Activated CD4-positive, alpha-beta T cell treated with anti-CD3 and anti-CD28 coated beads for 36 hours (primary cell): ENCODE measurements at regions of chr3 and their contacts with region 1.

Region 1: DNA sequence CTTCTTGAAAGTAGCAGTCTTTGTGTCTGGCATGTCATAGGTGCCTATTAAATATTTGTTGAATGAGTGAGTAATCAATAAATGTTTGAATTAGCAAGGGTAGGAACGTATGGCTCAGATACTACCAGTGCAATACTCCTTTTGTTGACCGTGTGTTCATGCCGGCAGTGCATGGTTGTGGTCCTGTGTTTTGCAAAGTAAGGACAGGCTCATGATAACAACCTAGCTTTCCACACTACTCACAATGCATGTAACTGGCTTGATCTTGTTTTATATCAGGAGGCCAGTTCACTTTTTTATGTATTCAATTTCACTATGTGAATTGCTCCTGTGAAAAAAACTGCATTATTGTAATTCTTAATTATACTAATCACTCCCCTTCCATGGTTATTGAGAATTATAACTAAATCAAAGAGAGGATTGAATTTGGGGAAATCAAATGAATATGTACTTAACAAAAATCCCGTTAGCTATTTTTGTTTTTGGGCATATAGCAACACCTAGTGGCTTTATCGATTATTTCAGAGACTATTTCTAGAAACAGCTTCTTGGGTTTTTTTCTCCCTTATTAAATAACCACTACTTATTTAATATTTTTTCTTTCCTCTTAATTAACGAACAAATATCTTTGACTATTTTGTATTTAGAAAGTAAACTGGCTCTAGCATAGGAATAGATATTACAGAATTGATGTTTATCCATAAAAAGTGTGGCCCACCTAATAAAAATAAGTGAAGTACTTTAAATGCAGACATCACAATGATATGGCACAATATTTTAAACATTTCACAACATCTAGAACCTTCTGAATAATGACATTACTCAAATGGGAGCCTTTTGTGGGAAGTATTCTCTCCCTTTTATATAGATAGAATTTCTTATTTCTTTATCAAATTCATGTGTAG is 218.5 kb downstream of the BBX start:
- DNase-seq: no peak
- ATAC-seq: no peak
- H3K4me3 Mint-ChIP-seq: no peak overlapping the region
- H3K27ac Mint-ChIP-seq: no peak overlapping the region
- H3K4me1 Mint-ChIP-seq: no peaks in the 10 kb centered on the region
- H3K27me3 Mint-ChIP-seq: no peaks in the 10 kb centered on the region

Region 2: DNA sequence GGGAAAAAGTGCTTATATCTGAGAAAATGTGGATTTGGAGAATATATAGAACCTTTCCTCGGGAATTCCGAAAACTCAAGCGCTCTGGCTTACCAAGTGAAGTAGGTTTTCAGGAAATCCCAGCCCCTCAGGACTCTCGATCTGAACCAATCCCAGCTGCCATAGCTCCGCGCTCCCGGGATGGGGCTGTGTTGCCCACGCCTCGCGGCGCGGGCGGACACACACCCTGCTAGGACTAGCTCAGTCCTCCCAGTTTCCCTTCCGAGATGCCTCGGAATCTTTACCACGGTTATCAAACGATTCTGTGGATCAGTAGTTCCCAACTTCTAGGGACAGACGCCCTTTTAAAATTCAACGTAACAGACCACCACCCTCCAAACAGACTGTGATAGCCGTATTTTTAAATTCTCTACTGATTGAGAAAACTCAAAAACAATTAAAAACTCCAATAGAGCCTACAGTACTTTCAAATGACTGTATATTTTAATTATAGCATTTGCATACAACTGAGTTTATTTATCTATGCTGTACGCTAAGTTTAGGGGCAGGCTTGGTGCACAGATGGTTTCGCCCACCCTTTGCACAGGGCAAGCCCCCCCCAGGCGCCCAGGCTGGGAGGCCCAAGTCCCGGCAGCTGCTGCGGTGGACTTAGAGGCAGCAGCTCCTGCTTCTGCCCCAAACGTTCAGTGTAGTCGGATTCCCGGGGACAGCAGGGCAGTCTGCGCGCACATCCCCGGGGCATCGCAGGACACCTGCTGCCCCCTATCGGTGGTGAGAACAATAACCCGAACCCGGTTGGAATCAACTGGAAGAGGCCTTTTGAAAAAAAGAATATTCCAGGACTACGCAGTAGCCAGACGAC is 311.7 kb before region 1 on chr3:
- CTCF ChIA-PET with region 1: no interaction called
- POLR2A ChIA-PET with region 1: no interaction called
- intact Hi-C with region 1: loop called in 1 of 2 experiments (anchors 5 kb)
- DNase-seq: peak; percentile 77
- ATAC-seq: peak; percentile 74
- H3K4me3 Mint-ChIP-seq: peak overlapping the region; percentile 68
- H3K27ac Mint-ChIP-seq: no peak overlapping the region
- H3K4me1 Mint-ChIP-seq: peaks cover 20% of the 10 kb centered on the region
- H3K27me3 Mint-ChIP-seq: peaks cover 3% of the 10 kb centered on the region

Region 3: DNA sequence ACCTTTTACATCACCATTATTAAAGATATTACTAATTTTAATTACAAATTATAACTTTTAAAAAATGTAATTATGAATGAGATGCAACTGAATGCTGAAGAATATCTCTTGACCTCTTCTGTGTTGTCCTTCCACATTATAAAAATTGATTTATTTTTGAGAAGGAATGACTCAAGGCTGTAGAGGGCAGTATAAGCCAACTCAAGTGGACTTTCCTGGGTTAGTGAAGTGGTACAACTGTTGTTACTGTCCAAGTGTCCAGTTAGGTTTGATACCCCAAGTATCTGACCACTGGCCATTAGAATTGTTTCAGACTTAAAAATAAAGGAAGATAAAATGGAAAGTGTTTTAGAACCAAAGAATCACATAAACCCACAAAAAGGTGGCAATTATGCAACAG is 166.6 kb before region 1 on chr3:
- CTCF ChIA-PET with region 1: interaction called, 10 read pairs
- POLR2A ChIA-PET with region 1: no interaction called
- intact Hi-C with region 1: loop called (anchors 2 to 5 kb)
- DNase-seq: no peak
- ATAC-seq: no peak
- H3K4me3 Mint-ChIP-seq: no peak overlapping the region
- H3K27ac Mint-ChIP-seq: no peak overlapping the region
- H3K4me1 Mint-ChIP-seq: peaks cover 26% of the 10 kb centered on the region
- H3K27me3 Mint-ChIP-seq: no peaks in the 10 kb centered on the region

Region 4: GRCh38 chr3:107660306-107660976 is 80.8 kb before region 1 on chr3:
- CTCF ChIA-PET with region 1: interaction called, 15 read pairs
- POLR2A ChIA-PET with region 1: no interaction called
- intact Hi-C with region 1: loop called (anchors 5 kb)
- DNase-seq: no peak
- ATAC-seq: no peak
- H3K4me3 Mint-ChIP-seq: no peak overlapping the region
- H3K27ac Mint-ChIP-seq: no peak overlapping the region
- H3K4me1 Mint-ChIP-seq: peaks cover 26% of the 10 kb centered on the region
- H3K27me3 Mint-ChIP-seq: no peaks in the 10 kb centered on the region

Region 5: GRCh38 chr3:107690522-107691138 is 50.6 kb before region 1 on chr3:
- CTCF ChIA-PET with region 1: interaction called, 9 read pairs
- POLR2A ChIA-PET with region 1: no interaction called
- intact Hi-C with region 1: loop called in 1 of 2 experiments (anchors 2 kb)
- DNase-seq: no peak
- ATAC-seq: peak; percentile 57
- H3K4me3 Mint-ChIP-seq: no peak overlapping the region
- H3K27ac Mint-ChIP-seq: no peak overlapping the region
- H3K4me1 Mint-ChIP-seq: peaks cover 13% of the 10 kb centered on the region
- H3K27me3 Mint-ChIP-seq: no peaks in the 10 kb centered on the region

Region 6: GRCh38 chr3:107729686-107730085 is 11.6 kb before region 1 on chr3:
- CTCF ChIA-PET with region 1: interaction called, 13 read pairs
- POLR2A ChIA-PET with region 1: no interaction called
- intact Hi-C with region 1: no loop called
- DNase-seq: no peak
- ATAC-seq: no peak
- H3K4me3 Mint-ChIP-seq: no peak overlapping the region
- H3K27ac Mint-ChIP-seq: no peak overlapping the region
- H3K4me1 Mint-ChIP-seq: peaks cover 23% of the 10 kb centered on the region
- H3K27me3 Mint-ChIP-seq: no peaks in the 10 kb centered on the region

Region 7: GRCh38 chr3:107753480-107753879 is 12.2 kb after region 1 on chr3:
- CTCF ChIA-PET with region 1: interaction called, 29 read pairs
- POLR2A ChIA-PET with region 1: no interaction called
- intact Hi-C with region 1: no loop called
- DNase-seq: peak; percentile 49
- ATAC-seq: peak; percentile 64
- H3K4me3 Mint-ChIP-seq: no peak overlapping the region
- H3K27ac Mint-ChIP-seq: no peak overlapping the region
- H3K4me1 Mint-ChIP-seq: no peaks in the 10 kb centered on the region
- H3K27me3 Mint-ChIP-seq: no peaks in the 10 kb centered on the region